Common myeloid progenitor, CD34-positive (primary cell): ENCODE measurements at regions of chr17 and their contacts with region 1.

Region 1: GRCh38 chr17:17496189-17497064 is at the start of gene RASD1:
- DNase-seq: peak; percentile 67 to 80 (median 74)
- H3K4me3 ChIP-seq: peak within 1 kb of the TSS; percentile 37 to 79 (median 72)
- H3K27ac ChIP-seq: no peak within 1 kb of the TSS
- H3K4me1 ChIP-seq: peaks cover 0 to 25% (median 21%) of the 10 kb centered on the region in 4 experiments
- H3K27me3 ChIP-seq: peaks cover 0 to 15% (median 6%) of the 10 kb centered on the region in 5 experiments

Region 2: GRCh38 chr17:17511881-17512858 is 15.7 kb after region 1 on chr17:
- CTCF ChIA-PET with region 1: interaction called, 35 read pairs
- POLR2A ChIA-PET with region 1: interaction called, 4 read pairs
- DNase-seq: peak; percentile 67 to 95 (median 91)
- H3K4me3 ChIP-seq: no peak overlapping the region
- H3K27ac ChIP-seq: no peak overlapping the region
- H3K4me1 ChIP-seq: peaks cover 0 to 42% (median 34%) of the 10 kb centered on the region in 4 experiments
- H3K27me3 ChIP-seq: no peaks in the 10 kb centered on the region

Region 3: GRCh38 chr17:17568749-17569195 is 72.3 kb after region 1 on chr17:
- CTCF ChIA-PET with region 1: interaction called, 37 read pairs
- POLR2A ChIA-PET with region 1: interaction called, 4 read pairs
- DNase-seq: peak; percentile 43 to 52 (median 46)
- H3K4me3 ChIP-seq: no peak overlapping the region
- H3K27ac ChIP-seq: no peak overlapping the region
- H3K4me1 ChIP-seq: no peaks in the 10 kb centered on the region
- H3K27me3 ChIP-seq: no peaks in the 10 kb centered on the region

Region 4: DNA sequence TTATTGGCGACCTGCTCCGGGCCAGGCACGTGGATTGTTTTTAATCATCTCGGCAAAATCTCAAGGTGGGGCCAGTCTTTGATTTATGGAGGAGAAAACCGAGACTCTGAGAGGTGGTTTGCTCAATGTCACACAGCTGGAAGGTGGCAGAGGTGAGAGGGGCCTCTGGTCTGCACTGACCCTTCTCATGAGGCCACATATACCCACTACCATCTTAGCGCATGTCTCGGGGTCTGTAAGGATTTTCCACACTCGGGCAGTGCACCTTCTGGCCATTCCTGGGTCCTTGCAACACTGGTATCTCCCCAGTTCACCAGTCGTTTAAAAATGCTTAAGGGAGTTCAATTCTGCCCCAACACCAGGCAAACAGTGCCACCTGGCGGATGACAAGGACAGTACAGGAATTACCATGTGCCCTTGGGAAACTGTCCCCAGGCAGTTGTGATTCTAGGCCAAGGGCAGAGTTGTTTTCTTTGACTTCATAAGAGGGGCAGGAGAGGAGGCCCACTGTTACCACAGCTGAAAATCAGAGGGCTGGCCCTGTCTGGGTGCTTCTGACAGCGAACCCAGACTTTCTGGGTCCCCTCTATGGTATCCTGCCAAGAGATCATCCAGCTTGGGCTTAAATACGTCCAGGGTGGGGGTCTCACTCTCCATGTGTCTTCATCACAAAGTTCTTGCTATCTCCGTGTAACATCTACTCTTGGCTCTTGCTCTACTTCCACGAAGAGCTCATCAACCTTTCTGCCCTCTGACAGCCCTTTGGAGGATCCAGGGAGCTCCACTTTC is 145.4 kb after region 1 on chr17:
- CTCF ChIA-PET with region 1: interaction called, 19 read pairs
- POLR2A ChIA-PET with region 1: interaction called, 3 read pairs
- DNase-seq: peak; percentile 70 to 89 (median 82)
- H3K4me3 ChIP-seq: no peak overlapping the region
- H3K27ac ChIP-seq: no peak overlapping the region
- H3K4me1 ChIP-seq: no peaks in the 10 kb centered on the region
- H3K27me3 ChIP-seq: no peaks in the 10 kb centered on the region